PC-3 (cell line): ENCODE measurements at regions of chr7 and their contacts with region 1.

Region 1: GRCh38 chr7:28685644-28686417 is 272.3 kb downstream of the TRIL start:
- DNase-seq: peak; percentile 97
- ATAC-seq: peak; percentile 89
- H3K4me3 ChIP-seq: peak overlapping the region; percentile 77
- H3K27ac ChIP-seq: peak overlapping the region; percentile 78
- H3K4me1 ChIP-seq: peaks cover 31% of the 10 kb centered on the region
- H3K27me3 ChIP-seq: no peaks in the 10 kb centered on the region
- CTCF ChIP-seq: no peak

Region 2: DNA sequence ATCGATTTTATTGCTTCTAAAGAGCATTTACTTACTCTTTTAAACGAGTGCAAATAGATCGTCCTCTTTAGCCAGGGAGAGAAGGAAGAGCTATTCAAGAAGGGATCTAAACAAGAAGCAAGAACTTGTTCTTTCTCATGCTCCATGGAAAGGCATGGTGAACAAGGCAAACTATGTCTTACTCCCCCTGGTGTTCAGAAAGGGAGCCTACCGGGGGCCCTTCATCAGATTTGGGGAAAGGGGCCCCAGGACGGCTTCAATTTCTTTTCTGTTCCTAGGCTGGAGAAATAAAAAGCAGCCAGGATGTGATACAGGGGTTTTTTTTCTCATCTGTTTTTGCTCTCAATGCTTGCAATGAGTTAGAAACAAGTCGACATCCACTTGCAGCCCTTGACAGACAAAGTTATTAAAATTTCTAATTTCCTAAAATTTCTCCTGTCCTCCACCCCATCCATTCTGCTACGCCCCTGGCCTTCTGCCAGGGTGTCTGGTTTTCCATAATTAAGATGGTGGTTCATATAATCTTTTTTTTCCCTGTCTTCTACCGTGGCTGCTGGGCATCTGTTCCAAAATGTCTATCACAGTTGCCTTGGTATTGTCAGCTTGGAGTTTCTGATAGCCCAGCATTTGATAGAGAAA is 59.1 kb before region 1 on chr7:
- CTCF ChIA-PET with region 1: no interaction called
- POLR2A ChIA-PET with region 1: no interaction called
- intact Hi-C with region 1: loop called (anchors 5 kb)
- DNase-seq: peak; percentile 68
- ATAC-seq: peak; percentile 55; the same call in 1 of the 2 replicates
- H3K4me3 ChIP-seq: no peak overlapping the region
- H3K27ac ChIP-seq: no peak overlapping the region
- H3K4me1 ChIP-seq: peaks cover 12% of the 10 kb centered on the region; the same call in 1 of the 2 replicates
- H3K27me3 ChIP-seq: no peaks in the 10 kb centered on the region
- CTCF ChIP-seq: peak; percentile 84

Region 3: GRCh38 chr7:28714459-28715120 is 28.8 kb after region 1 on chr7:
- CTCF ChIA-PET with region 1: no interaction called
- POLR2A ChIA-PET with region 1: no interaction called
- intact Hi-C with region 1: no loop called
- DNase-seq: no peak
- ATAC-seq: no peak
- H3K4me3 ChIP-seq: no peak overlapping the region
- H3K27ac ChIP-seq: no peak overlapping the region
- H3K4me1 ChIP-seq: no peaks in the 10 kb centered on the region
- H3K27me3 ChIP-seq: no peaks in the 10 kb centered on the region
- CTCF ChIP-seq: no peak

Region 4: DNA sequence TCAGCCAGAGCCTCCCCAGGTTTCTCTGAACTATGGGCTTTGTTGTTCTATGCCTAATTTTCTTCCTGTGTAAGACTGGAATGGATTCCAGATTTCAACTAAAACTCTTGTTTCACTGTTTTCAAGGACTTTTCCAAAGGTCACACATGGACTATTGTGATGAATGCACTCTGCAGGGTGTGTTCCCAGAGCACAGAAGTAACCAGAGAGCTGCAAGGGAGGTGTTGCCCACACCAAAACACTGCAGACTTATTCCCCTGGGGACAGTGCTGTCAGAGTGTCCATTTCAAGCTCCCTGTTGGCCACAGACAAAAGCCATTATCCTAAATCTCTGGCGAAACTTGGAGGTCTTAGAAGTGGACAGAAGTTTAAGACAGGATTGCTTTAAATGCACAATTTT is 40.7 kb after region 1 on chr7:
- CTCF ChIA-PET with region 1: no interaction called
- POLR2A ChIA-PET with region 1: interaction called, 7 read pairs
- intact Hi-C with region 1: loop called (anchors 1 kb)
- DNase-seq: no peak
- ATAC-seq: no peak
- H3K4me3 ChIP-seq: no peak overlapping the region
- H3K27ac ChIP-seq: no peak overlapping the region
- H3K4me1 ChIP-seq: peaks cover 49% of the 10 kb centered on the region
- H3K27me3 ChIP-seq: no peaks in the 10 kb centered on the region
- CTCF ChIP-seq: no peak

Region 5: GRCh38 chr7:28748933-28749584 is 63.2 kb after region 1 on chr7:
- CTCF ChIA-PET with region 1: no interaction called
- POLR2A ChIA-PET with region 1: no interaction called
- intact Hi-C with region 1: loop called (anchors 5 kb)
- DNase-seq: peak; percentile 86
- ATAC-seq: peak; percentile 100
- H3K4me3 ChIP-seq: no peak overlapping the region
- H3K27ac ChIP-seq: peak overlapping the region; percentile 44
- H3K4me1 ChIP-seq: peaks cover 13% of the 10 kb centered on the region
- H3K27me3 ChIP-seq: no peaks in the 10 kb centered on the region
- CTCF ChIP-seq: peak; percentile 30